Activated CD8-positive, alpha-beta T cell treated with anti-CD3 and anti-CD28 coated beads for 36 hours (primary cell): ENCODE measurements at regions of chr3 and their contacts with region 1.

Region 1: DNA sequence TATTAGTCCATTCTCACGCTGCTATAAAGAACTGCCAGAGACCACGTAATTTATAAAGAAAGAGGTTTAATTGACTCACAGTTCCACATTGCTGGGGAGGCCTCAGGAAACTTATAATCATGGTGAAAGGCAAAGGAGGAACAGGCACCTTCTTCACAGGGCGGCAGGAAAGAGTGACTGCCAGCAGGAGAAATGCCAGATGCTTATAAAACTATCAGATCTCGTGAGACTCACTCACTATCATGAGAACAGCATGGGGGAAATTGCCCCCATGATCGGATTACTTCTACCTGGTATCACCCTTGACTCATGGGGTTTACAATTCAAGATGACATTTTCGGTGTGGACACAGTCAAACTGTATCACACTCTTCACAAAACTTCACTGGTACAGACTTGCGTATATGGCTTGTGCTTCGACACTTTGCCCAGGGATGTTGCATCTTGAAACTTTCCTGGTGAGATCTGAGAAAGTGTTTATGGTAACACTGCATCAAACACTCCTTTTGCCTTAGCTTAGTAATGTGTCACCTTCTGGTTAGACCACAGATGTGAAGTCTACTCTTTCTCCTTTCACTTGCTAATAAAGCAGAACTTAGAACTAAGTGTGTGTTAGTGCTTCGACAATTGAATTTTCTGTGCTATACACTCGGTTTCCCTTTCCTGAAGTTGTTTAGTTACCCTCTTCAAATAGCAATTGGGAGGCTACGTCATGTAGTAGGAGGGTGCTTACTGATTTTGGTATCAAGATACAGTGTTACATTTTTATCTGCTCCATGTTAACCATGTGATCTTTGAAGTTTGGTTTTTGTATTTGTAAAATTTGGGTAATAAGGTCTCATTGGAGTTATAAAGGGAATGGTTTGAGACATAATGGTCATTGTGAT is 185.7 kb downstream of the LPP start:
- DNase-seq: peak; percentile 74
- ATAC-seq: peak; percentile 88
- H3K4me3 Mint-ChIP-seq: peak overlapping the region; percentile 68
- H3K27ac Mint-ChIP-seq: peak overlapping the region; percentile 95
- H3K4me1 Mint-ChIP-seq: peaks cover 42% of the 10 kb centered on the region
- H3K27me3 Mint-ChIP-seq: no peaks in the 10 kb centered on the region
- CTCF ChIP-seq: no peak

Region 2: GRCh38 chr3:188309437-188310269 is 30.0 kb before region 1 on chr3:
- CTCF ChIA-PET with region 1: interaction called, 3 read pairs
- POLR2A ChIA-PET with region 1: interaction called, 3 read pairs
- intact Hi-C with region 1: loop called (anchors 1 kb)
- DNase-seq: peak; percentile 66
- ATAC-seq: peak; percentile 81
- H3K4me3 Mint-ChIP-seq: no peak overlapping the region
- H3K27ac Mint-ChIP-seq: peak overlapping the region; percentile 44
- H3K4me1 Mint-ChIP-seq: peaks cover 20% of the 10 kb centered on the region
- H3K27me3 Mint-ChIP-seq: no peaks in the 10 kb centered on the region
- CTCF ChIP-seq: no peak

Region 3: GRCh38 chr3:188584162-188584529 is 244.5 kb after region 1 on chr3:
- CTCF ChIA-PET with region 1: no interaction called
- POLR2A ChIA-PET with region 1: no interaction called
- intact Hi-C with region 1: loop called (anchors 5 kb)
- DNase-seq: no peak
- ATAC-seq: peak; percentile 69
- H3K4me3 Mint-ChIP-seq: no peak overlapping the region
- H3K27ac Mint-ChIP-seq: no peak overlapping the region
- H3K4me1 Mint-ChIP-seq: peaks cover 25% of the 10 kb centered on the region
- H3K27me3 Mint-ChIP-seq: no peaks in the 10 kb centered on the region
- CTCF ChIP-seq: no peak

Region 4: DNA sequence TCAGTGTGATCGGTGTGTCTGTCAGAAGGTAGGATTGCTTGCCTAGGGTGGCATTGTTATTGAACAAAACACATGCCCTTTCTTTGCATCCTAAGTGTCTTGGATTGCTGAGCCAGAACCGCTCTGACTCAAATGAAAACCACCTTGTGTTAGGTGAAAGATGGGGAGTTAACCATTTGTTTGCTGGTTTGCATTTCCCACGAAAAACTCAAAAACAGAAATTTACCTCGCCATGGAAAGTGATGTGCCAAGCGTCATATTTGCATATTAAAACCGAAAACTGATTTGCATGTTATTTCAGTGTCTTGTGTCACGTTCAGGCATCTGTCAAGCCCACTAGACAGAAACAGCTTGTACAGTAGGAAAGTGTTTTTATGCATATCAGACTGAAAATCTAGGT is 357.5 kb after region 1 on chr3:
- CTCF ChIA-PET with region 1: no interaction called
- POLR2A ChIA-PET with region 1: no interaction called
- intact Hi-C with region 1: no loop called
- DNase-seq: peak; percentile 27
- ATAC-seq: no peak
- H3K4me3 Mint-ChIP-seq: no peak overlapping the region
- H3K27ac Mint-ChIP-seq: no peak overlapping the region
- H3K4me1 Mint-ChIP-seq: peaks cover 33% of the 10 kb centered on the region
- H3K27me3 Mint-ChIP-seq: no peaks in the 10 kb centered on the region
- CTCF ChIP-seq: no peak